ENCODE measurements at regions of chr6 and their contacts with region 1.

Region 1: GRCh38 chr6:160930547-160931377 is 60.8 kb upstream of the MAP3K4 start:
- DNase-seq: peak; percentile 79
- ATAC-seq: peak; percentile 96

Region 2: DNA sequence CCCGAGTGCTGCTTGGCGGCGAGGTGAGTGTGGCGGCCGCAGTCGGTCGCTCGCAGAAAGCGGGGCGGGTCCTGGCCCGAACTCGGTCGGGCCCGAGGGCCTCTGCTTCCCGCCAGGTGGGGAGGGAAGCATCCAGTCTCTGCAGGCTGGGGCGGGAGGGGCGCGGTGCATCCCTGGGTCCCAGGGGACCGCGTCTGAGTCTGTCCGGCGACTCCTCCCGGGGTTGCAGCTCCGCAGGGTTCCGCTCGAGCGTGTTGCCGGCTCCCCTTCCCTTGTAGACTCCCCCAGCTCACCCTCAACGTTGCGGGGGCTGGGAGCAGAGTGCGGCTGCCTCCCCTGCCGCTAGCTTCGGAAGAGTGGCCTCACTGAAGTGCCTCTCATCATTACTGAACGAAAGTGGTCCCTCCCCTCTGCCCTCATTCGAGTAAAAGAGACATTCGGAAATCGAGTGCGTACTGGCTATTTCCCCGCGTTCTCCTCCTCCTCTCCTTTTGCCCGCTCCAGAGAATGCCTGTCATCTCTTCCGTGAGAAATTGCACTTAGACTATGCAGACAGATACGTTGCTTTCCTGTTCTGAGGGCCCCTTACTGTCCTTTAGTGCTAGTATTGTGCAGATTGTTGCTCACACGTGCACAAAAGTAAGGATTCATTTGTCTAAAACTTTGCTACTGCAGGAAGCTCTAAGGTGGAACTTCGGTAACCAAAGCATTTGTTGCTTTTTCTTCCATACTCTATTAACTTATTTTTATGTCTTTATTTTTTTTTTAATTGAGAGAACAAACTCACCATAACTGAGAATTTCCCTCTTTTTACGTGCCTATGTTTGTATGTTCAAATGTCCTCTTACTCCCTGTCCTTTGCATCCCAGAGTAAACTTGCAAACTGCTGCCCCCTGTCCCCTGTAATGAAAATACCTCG is 61.6 kb after region 1 on chr6:
- intact Hi-C with region 1: loop called (anchors 2 kb)
- DNase-seq: peak; percentile 53
- ATAC-seq: peak; percentile 53 to 71

Region 3: GRCh38 chr6:161066511-161066910 is 135.7 kb after region 1 on chr6:
- intact Hi-C with region 1: loop called (anchors 10 kb)
- DNase-seq: no peak
- ATAC-seq: no peak

Region 4: GRCh38 chr6:161101517-161101916 is 170.8 kb after region 1 on chr6:
- intact Hi-C with region 1: no loop called
- DNase-seq: no peak
- ATAC-seq: no peak

Measured in left cardiac atrium (tissue), 4 donors.